ENCODE measurements at regions of chr7 and their contacts with region 1.

Region 1: GRCh38 chr7:158976849-158977593 is 120.7 kb downstream of the DYNC2I1 start:
- DNase-seq: peak; percentile 71
- ATAC-seq: peak; percentile 93
- H3K4me3 ChIP-seq: peak overlapping the region; percentile 59
- H3K27ac ChIP-seq: peak overlapping the region; percentile 52
- H3K4me1 ChIP-seq: peaks cover 16% of the 10 kb centered on the region
- H3K27me3 ChIP-seq: no peaks in the 10 kb centered on the region
- CTCF ChIP-seq: peak; percentile 84 to 94 (median 90); a peak in 5 of 6 replicates
- EP300 ChIP-seq: peak in 1 of 2 experiments; percentile 37; a peak in 1 of 4 replicates
- POLR2A ChIP-seq: no peak
- RAD21 ChIP-seq: peak; percentile 84

Region 2: DNA sequence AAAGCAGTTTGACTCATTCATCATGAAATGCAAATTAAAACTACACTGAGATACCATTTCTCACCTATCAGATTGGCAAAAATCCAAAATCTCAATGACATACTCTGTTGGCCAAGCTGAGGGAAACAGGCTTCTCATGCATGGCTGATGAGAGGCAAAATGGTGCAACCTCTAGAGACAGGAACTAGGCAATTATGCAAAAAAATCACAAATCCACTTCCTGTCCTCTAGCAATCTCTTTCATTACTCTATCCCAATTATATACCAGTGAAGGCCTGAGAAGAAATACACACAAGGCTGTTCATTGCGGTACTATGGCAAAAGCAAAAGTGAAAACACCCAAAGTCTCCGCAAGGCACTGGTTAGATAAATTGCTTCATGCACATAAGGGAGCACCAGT is 363.5 kb before region 1 on chr7:
- CTCF ChIA-PET with region 1: interaction called, 9 read pairs
- POLR2A ChIA-PET with region 1: no interaction called
- RAD21 ChIA-PET with region 1: interaction called, 9 read pairs
- SMC1A ChIA-PET with region 1: interaction called, 5 read pairs
- in situ Hi-C with region 1: no loop called
- intact Hi-C with region 1: loop called (anchors 10 kb)
- DNase-seq: peak; percentile 79
- ATAC-seq: peak; percentile 93
- H3K4me3 ChIP-seq: no peak overlapping the region; the same call in 1 of the 2 replicates
- H3K27ac ChIP-seq: peak overlapping the region; percentile 57
- H3K4me1 ChIP-seq: peaks cover 15% of the 10 kb centered on the region
- H3K27me3 ChIP-seq: no peaks in the 10 kb centered on the region
- CTCF ChIP-seq: no peak
- EP300 ChIP-seq: no peak
- POLR2A ChIP-seq: no peak
- RAD21 ChIP-seq: no peak

Region 3: GRCh38 chr7:158704704-158705468 is 272.1 kb before region 1 on chr7 and contains the start of gene NCAPG2:
- CTCF ChIA-PET with region 1: interaction called, 78 read pairs
- POLR2A ChIA-PET with region 1: interaction called, 3 read pairs
- RAD21 ChIA-PET with region 1: interaction called, 14 read pairs
- SMC1A ChIA-PET with region 1: interaction called, 62 read pairs
- in situ Hi-C with region 1: no loop called
- intact Hi-C with region 1: no loop called
- DNase-seq: peak; percentile 88
- ATAC-seq: peak; percentile 98
- H3K4me3 ChIP-seq: peak within 1 kb of the TSS; percentile 97
- H3K27ac ChIP-seq: peak within 1 kb of the TSS; percentile 90
- H3K4me1 ChIP-seq: peaks cover 3% of the 10 kb centered on the region
- H3K27me3 ChIP-seq: no peaks in the 10 kb centered on the region
- CTCF ChIP-seq: peak in 1 of 3 experiments; percentile 18; a peak in 1 of 6 replicates
- EP300 ChIP-seq: no peak
- POLR2A ChIP-seq: peak; percentile 98
- RAD21 ChIP-seq: no peak
- polyA plus RNA-seq, gene NCAPG2: 11.2 to 27.9 TPM

Region 4: DNA sequence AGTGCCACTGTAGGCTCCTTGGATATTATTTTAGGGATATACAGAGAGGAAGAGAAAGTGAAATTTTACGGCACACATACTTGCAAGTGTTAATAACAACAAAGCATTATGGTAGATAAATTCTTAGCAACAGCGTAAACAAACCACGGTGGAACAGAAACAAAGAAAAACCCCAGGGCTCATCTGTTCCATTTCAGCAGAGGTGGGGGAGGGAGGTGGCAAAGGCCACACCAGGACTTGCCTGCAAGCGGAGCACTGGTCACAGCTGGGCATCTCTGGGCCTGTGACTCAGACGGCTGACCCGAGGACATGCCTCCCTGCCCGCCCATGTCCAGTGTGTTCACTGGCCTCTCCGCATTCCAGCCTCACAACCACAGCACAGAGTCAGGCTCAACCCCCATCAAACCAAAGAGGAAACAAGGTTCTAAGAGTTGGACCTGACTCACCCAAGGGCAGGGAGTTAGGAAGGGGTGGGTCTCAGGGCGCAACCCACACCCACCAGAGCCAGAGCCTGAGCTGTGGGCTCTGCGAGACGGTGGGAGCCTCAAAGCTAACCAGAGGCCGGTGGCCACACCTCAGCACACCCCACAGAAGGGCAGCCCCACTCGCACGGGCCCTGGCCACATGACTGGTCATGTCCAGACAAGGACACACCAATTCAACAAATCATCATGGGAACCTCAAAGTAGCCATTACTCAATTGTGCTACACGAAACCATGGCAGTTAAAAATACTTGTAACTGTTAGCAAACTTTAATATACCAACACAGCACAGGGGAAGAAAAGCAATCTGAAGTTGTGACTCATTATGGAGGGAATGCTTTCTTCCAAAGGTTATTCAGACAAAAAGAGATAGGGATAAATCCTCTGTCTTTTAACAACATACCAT is 158.5 kb before region 1 on chr7:
- CTCF ChIA-PET with region 1: interaction called, 17 read pairs
- POLR2A ChIA-PET with region 1: no interaction called
- RAD21 ChIA-PET with region 1: interaction called, 27 read pairs
- SMC1A ChIA-PET with region 1: interaction called, 5 read pairs
- in situ Hi-C with region 1: no loop called
- intact Hi-C with region 1: no loop called
- DNase-seq: peak; percentile 47
- ATAC-seq: peak; percentile 93
- H3K4me3 ChIP-seq: peak overlapping the region; percentile 47
- H3K27ac ChIP-seq: peak overlapping the region; percentile 82
- H3K4me1 ChIP-seq: peaks cover 8% of the 10 kb centered on the region; the same call in 1 of the 2 replicates
- H3K27me3 ChIP-seq: no peaks in the 10 kb centered on the region
- CTCF ChIP-seq: peak in 1 of 3 experiments; percentile 34; a peak in 1 of 6 replicates
- EP300 ChIP-seq: peak; percentile 74 to 90; a peak in 3 of 4 replicates
- POLR2A ChIP-seq: peak; percentile 76
- RAD21 ChIP-seq: no peak; the same call in 1 of the 2 replicates

Region 5: DNA sequence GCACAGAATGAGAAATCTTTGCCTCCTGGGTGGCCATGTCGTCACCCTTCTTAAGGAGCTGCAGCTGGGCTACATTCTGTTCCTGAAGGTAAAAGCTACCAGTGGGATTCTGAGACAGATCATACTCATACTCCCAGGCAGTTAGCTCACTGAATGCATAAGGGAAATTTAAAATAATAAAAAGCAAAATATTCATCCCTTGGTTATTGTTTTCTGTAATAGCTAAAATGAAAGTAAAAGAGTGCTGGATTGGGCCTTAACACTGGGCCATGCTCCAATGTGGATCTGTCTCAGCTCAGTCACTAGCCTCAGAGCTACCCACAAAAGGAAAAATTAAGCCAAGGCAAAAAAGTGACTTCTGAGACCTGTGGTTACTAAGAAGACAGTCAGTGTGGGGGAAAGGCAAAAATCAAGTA is 129.6 kb before region 1 on chr7:
- CTCF ChIA-PET with region 1: interaction called, 11 read pairs
- POLR2A ChIA-PET with region 1: no interaction called
- RAD21 ChIA-PET with region 1: interaction called, 6 read pairs
- SMC1A ChIA-PET with region 1: no interaction called
- in situ Hi-C with region 1: no loop called
- intact Hi-C with region 1: no loop called
- DNase-seq: no peak
- ATAC-seq: peak; percentile 45; the same call in 2 of the 3 replicates
- H3K4me3 ChIP-seq: no peak overlapping the region
- H3K27ac ChIP-seq: no peak overlapping the region
- H3K4me1 ChIP-seq: no peaks in the 10 kb centered on the region
- H3K27me3 ChIP-seq: no peaks in the 10 kb centered on the region
- CTCF ChIP-seq: no peak
- EP300 ChIP-seq: no peak
- POLR2A ChIP-seq: no peak
- RAD21 ChIP-seq: no peak

Region 6: DNA sequence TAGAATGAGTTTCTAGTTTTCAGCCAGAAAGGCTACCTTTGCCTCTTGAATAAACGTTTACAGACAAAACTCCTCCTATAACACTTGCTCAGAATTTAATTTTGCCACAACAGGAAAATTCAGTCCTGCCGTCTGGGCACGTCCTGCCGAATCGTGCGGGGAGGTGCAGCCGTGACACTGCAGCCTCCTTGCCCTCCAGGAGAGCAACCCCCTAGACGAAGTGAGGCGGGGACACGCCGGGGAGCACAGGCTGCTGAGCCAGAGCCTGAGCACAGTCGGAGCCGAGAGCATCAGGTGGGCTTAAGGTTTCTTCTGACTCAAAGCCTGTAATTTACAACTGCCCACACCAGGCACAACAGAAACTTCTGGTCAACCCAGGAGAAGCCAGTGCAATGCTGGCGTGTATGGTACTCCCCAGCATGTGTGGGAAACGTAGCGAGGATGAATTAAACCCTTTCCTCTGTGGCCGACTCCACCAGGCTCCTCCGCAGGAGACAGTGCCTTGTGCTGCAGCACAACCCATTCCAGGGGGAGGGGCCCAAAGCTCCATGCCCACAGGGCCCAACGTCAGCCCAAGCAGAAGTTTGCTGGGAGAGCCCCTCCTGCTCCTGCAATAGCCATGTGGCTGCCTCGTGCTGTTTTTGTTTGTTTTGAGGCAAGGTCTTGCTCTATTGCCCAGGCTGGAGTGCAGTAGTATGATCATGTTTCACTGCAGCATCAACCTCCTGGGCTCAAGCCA is 18.2 kb before region 1 on chr7:
- CTCF ChIA-PET with region 1: interaction called, 17 read pairs
- POLR2A ChIA-PET with region 1: no interaction called
- RAD21 ChIA-PET with region 1: interaction called, 4 read pairs
- SMC1A ChIA-PET with region 1: interaction called, 3 read pairs
- in situ Hi-C with region 1: no loop called
- intact Hi-C with region 1: no loop called
- DNase-seq: no peak
- ATAC-seq: no peak
- H3K4me3 ChIP-seq: no peak overlapping the region
- H3K27ac ChIP-seq: no peak overlapping the region
- H3K4me1 ChIP-seq: no peaks in the 10 kb centered on the region
- H3K27me3 ChIP-seq: no peaks in the 10 kb centered on the region
- CTCF ChIP-seq: no peak
- EP300 ChIP-seq: no peak
- POLR2A ChIP-seq: no peak
- RAD21 ChIP-seq: no peak

Measured in GM12878 (cell line).